ENCODE measurements at regions of chr6 and their contacts with region 1.

Region 1: DNA sequence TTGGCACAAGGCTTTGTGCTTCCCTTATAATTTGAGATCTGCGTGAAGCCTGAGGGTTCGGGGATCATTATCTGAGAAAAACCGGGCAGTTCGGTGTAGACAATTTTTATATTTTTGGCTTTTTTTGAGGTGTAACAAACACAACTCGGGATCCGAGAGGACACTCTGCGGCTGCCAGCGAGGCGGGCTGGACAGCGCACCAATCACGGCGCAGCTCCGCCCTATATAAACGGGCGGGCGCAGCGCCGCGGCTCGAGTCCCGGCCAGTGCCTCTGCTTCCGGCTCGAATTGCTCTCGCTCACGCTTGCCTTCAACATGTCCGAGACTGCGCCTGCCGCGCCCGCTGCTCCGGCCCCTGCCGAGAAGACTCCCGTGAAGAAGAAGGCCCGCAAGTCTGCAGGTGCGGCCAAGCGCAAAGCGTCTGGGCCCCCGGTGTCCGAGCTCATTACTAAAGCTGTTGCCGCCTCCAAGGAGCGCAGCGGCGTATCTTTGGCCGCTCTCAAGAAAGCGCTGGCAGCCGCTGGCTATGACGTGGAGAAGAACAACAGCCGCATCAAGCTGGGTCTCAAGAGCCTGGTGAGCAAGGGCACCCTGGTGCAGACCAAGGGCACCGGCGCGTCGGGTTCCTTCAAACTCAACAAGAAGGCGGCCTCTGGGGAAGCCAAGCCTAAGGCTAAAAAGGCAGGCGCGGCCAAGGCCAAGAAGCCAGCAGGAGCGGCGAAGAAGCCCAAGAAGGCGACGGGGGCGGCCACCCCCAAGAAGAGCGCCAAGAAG is 69.0 kb downstream of the HFE start:
- H3K4me3 ChIP-seq: peak overlapping the region; percentile 71
- H3K27ac ChIP-seq: peak overlapping the region; percentile 48; the same call in 1 of the 2 replicates
- H3K4me1 ChIP-seq: no peaks in the 10 kb centered on the region
- CTCF ChIP-seq: peak; percentile 41; the same call in 1 of the 2 replicates

Region 2: GRCh38 chr6:26054857-26055669 is 101.2 kb before region 1 on chr6:
- CTCF ChIA-PET with region 1: no interaction called
- POLR2A ChIA-PET with region 1: interaction called, 24 read pairs
- H3K4me3 ChIP-seq: peak overlapping the region; percentile 85
- H3K27ac ChIP-seq: peak overlapping the region; percentile 81
- H3K4me1 ChIP-seq: peaks cover 5% of the 10 kb centered on the region; the same call in 1 of the 2 replicates
- CTCF ChIP-seq: no peak

Region 3: GRCh38 chr6:26136321-26136720 is 19.9 kb before region 1 on chr6:
- CTCF ChIA-PET with region 1: no interaction called
- POLR2A ChIA-PET with region 1: interaction called, 11 read pairs
- H3K4me3 ChIP-seq: no peak overlapping the region
- H3K27ac ChIP-seq: no peak overlapping the region
- H3K4me1 ChIP-seq: no peaks in the 10 kb centered on the region
- CTCF ChIP-seq: no peak

Region 4: DNA sequence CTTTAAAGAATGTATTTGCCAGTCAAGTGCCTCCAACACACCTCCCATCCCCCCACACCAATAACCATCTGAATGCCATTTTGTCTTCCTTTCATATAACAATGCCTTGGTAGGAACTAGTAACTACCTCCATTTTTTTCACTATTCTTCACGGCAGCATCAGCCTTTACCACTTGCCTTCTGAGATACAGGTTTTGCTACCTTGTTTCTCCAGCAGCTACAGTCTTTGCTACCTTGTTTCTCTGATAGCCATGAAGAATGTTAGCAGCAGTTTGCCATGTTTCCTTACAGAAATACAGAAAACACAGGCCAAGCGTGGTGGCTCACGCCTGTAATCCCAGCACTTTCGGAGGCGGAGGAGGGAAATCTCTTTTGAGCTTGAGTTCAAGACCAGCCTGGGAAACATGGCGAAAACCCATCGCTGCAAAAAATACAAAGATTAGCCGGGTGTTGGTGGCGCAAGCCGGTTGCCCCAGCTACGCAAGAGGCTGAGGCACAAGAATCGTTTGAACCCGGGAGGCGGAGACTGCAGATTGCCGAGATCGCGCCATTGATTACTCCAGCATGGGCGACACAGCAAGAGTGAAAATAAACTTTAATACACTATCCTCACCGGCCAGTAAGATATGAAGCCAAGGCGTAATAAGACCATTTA is 31.8 kb after region 1 on chr6:
- CTCF ChIA-PET with region 1: interaction called, 5 read pairs
- POLR2A ChIA-PET with region 1: interaction called, 32 read pairs
- H3K4me3 ChIP-seq: peak overlapping the region; percentile 57
- H3K27ac ChIP-seq: peak overlapping the region; percentile 35; the same call in 1 of the 2 replicates
- H3K4me1 ChIP-seq: no peaks in the 10 kb centered on the region
- CTCF ChIP-seq: no peak

Region 5: DNA sequence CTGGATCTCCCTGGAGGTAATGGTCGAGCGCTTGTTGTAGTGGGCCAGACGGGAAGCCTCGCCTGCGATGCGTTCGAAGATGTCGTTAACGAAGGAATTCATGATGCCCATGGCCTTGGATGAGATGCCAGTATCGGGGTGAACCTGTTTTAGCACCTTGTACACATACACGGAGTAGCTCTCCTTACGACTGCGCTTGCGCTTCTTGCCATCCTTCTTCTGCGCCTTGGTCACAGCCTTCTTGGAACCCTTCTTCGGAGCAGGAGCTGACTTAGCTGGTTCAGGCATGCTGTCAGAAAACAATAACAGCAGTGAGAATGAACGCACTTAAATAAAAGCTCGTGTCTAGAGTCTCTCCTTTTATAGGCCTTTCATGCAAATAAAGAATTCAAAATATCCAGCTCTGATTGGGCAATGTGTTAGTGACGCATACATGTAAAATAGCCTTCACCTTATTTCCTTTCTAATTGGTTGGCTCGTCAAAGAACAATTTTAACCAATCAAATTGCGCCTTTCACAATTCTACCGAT is 60.2 kb after region 1 on chr6:
- CTCF ChIA-PET with region 1: no interaction called
- POLR2A ChIA-PET with region 1: interaction called, 55 read pairs
- H3K4me3 ChIP-seq: peak overlapping the region; percentile 70
- H3K27ac ChIP-seq: no peak overlapping the region
- H3K4me1 ChIP-seq: no peaks in the 10 kb centered on the region
- CTCF ChIP-seq: no peak

Region 6: DNA sequence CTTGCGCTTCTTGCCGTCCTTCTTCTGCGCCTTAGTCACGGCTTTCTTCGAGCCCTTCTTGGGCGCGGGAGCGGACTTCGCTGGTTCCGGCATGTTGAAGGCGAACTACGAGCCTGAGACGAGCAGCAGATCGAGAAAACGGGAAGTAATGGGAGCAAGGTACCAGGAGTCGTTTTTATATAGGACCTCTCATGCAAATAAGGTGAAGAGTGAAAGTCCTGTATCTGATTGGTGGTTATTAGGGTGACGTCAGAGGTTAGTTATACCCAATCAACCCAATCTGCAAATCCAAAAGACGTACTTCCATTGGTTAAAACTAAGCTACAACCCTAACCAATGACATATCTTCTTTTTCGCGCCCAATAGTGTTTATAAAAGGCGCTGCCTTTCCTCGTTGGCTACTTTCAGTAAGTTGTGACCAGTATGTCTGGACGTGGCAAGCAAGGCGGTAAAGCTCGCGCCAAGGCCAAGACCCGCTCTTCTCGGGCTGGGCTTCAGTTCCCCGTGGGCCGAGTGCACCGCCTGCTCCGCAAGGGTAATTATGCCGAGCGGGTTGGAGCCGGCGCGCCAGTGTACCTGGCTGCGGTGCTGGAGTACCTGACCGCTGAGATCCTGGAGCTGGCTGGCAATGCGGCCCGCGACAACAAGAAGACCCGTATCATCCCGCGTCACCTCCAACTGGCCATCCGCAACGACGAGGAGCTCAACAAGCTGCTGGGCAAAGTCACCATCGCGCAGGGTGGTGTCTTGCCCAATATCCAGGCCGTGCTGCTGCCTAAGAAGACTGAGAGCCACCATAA is 990.6 kb after region 1 on chr6:
- CTCF ChIA-PET with region 1: no interaction called
- POLR2A ChIA-PET with region 1: interaction called, 13 read pairs
- H3K4me3 ChIP-seq: peak overlapping the region; percentile 55
- H3K27ac ChIP-seq: peak overlapping the region; percentile 81; the same call in 1 of the 2 replicates
- H3K4me1 ChIP-seq: no peaks in the 10 kb centered on the region
- CTCF ChIP-seq: 0 out of 2 replicates have a peak, but pooled peaks have one; percentile 14

Measured in HEK293 (cell line).